ENCODE measurements at regions of chr10 and their contacts with region 1.

Region 1: DNA sequence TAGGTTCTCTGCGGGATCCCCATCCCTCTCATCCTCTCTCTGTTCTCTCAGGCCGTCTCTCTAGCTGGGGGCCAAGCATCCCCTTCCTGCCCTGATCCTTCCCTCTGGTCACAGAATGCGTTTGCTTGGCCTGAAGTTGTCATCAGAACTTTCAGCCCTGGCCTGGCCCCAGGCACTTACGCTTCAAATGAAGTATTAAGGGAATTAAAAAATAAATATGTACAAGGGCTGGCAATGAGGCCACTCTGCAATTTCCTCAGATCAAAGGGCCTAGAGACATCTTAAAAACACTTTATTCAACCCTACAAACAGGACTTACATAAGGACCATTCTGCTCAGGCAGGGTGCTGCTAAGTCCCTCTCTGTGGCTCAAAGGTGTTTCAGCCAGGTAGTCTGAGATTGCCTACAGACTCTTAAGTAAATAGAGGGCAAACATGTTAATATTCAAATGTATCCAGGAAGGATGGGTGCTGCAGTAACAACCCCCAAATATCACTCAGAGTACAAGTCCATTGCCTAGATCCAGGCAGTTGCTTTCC is 16.0 kb downstream of the SFTPD start:
- DNase-seq: no peak
- H3K4me3 ChIP-seq: no peak overlapping the region
- CTCF ChIP-seq: no peak

Region 2: GRCh38 chr10:79542626-79543025 is 390.3 kb before region 1 on chr10:
- CTCF ChIA-PET with region 1: interaction called, 10 read pairs
- POLR2A ChIA-PET with region 1: no interaction called
- DNase-seq: no peak
- H3K4me3 ChIP-seq: no peak overlapping the region
- CTCF ChIP-seq: no peak

Measured in AG04449 (cell line).